Common myeloid progenitor, CD34-positive (primary cell): ENCODE measurements at regions of chr5 and their contacts with region 1.

Region 1: GRCh38 chr5:170278611-170279452 is 18.7 kb downstream of the LCP2 start:
- DNase-seq: peak; percentile 98 to 100 (median 99)
- H3K4me3 ChIP-seq: peak overlapping the region in 5 of 7 experiments; percentile 33 to 70 (median 53)
- H3K27ac ChIP-seq: peak overlapping the region; percentile 83
- H3K4me1 ChIP-seq: peaks cover 29 to 89% (median 82%) of the 10 kb centered on the region in 4 experiments
- H3K27me3 ChIP-seq: no peaks in the 10 kb centered on the region

Region 2: GRCh38 chr5:170293273-170293672 is 14.4 kb after region 1 on chr5:
- CTCF ChIA-PET with region 1: interaction called, 430 read pairs
- POLR2A ChIA-PET with region 1: interaction called, 18 read pairs
- DNase-seq: peak; percentile 84 to 95 (median 95)
- H3K4me3 ChIP-seq: peak overlapping the region in 6 of 7 experiments; percentile 11 to 94 (median 20)
- H3K27ac ChIP-seq: peak overlapping the region in 1 of 2 experiments; percentile 40
- H3K4me1 ChIP-seq: peaks cover 50 to 89% (median 80%) of the 10 kb centered on the region in 4 experiments
- H3K27me3 ChIP-seq: no peaks in the 10 kb centered on the region

Region 3: DNA sequence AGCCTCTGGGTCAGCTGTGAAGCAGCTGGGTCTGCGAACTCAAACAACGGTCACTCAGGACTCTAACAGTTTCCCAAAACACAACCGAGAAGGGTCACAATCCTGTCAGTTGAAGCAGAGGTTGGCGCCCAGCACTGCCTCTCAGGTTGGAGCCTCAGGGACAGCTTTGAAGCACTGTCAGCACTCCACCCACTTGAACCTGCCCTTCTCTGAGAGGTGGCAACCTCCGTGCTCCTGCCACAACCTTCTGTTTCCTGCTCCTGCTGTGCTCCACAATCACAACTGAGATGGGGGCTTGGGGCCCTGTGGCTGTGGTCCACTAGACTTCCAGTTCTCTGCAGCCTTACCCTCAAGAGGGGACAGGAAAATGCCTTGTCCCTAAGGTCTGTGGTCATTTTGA is 40.5 kb after region 1 on chr5:
- CTCF ChIA-PET with region 1: interaction called, 11 read pairs
- POLR2A ChIA-PET with region 1: no interaction called
- DNase-seq: peak in 2 of 3 donors; percentile 40 to 60
- H3K4me3 ChIP-seq: no peak overlapping the region
- H3K27ac ChIP-seq: no peak overlapping the region
- H3K4me1 ChIP-seq: peaks cover 0 to 12% (median 4%) of the 10 kb centered on the region in 4 experiments
- H3K27me3 ChIP-seq: no peaks in the 10 kb centered on the region

Region 4: DNA sequence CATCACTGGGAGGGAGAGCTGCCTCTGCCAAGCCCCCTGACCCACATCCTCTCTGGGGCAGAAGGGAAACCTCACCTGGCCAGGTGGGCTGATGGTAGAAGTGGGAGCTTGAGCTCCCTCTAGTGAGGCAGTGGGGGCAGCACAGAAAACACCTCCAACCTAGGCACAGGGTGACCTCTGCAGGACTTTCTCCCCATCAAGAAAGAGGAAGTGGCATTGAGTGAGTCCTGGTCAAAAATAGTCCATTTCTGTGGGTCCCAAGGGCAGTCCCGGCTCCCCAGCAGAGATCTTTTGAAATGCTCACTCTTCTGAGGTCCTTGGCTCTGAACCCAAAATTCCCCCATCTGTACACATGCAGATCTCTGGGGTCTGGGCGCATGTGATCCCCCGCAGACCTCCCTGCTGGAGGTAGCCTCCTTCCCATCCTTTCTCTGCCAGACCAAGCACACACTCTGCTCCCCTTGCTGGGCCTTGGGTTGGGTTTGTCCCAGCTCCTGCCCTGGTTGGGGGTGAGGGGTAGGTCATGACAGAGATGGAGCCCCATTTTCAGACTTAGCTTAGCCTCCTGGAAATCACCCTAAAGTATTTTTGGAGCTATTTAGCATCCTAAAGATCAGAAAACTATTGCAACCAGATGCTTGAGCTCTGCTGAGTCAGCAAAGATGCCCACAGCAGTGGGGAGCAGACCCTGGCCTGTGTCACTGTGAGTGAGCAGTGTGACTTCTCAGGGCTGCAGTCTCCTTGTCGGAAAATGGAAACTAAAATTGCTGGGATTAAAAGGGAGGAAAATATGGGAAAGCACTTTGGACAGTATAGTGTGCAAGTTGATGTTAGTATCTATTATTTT is 60.3 kb after region 1 on chr5:
- CTCF ChIA-PET with region 1: interaction called, 26 read pairs
- POLR2A ChIA-PET with region 1: interaction called, 4 read pairs
- DNase-seq: peak in 2 of 3 donors; percentile 35 to 36
- H3K4me3 ChIP-seq: no peak overlapping the region
- H3K27ac ChIP-seq: no peak overlapping the region
- H3K4me1 ChIP-seq: peaks cover 7 to 47% (median 29%) of the 10 kb centered on the region in 4 experiments
- H3K27me3 ChIP-seq: no peaks in the 10 kb centered on the region

Region 5: DNA sequence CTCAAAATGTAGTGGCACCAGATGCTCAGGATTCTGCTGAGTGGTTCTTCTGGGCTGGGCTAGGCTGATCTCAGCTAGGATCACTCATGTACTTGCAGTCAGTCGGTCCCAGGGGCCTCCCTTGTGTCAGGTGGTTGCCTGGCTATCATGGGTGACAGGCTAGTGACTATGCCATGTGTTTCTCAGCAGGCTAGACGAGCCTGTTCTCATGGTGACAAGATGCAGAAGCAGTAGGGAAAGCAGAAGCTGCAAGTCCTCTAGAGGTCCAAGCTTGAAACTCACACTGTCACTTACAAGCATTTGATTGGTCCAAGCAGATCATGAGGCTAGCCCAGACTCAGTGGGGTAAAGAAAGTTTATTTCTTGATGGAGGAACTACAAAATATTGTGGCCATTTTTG is 125.6 kb after region 1 on chr5:
- CTCF ChIA-PET with region 1: interaction called, 11 read pairs
- POLR2A ChIA-PET with region 1: no interaction called
- DNase-seq: peak; percentile 41 to 88 (median 79)
- H3K4me3 ChIP-seq: no peak overlapping the region
- H3K27ac ChIP-seq: no peak overlapping the region
- H3K4me1 ChIP-seq: peaks cover 5 to 25% (median 20%) of the 10 kb centered on the region in 4 experiments
- H3K27me3 ChIP-seq: no peaks in the 10 kb centered on the region

Region 6: DNA sequence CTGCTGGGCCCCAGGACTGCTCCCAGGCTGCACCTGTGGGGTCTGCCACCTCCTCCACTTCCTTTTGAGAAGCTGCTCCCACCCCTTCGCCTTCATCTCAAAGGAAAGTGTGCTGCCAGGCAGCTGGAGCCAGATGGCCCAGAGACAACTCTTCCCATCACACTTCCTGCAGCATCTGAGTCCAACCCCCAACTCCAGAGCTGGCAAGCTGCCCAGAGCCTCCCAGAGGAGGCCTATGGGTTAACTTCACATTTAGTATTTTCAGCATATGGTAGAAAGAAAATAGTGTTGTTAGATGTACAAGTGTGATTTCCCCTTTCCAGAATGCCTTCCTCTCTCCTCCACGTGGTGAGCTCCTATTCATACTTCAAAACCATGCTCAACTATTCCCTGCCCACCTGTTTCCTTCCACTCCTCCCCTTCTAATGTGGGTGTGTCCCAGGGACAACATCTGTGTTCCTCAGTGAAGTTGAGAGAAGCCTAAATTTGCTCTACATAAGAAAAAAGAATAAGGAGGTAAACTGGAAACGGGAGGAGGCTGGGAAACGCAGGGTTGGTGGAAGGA is 148.9 kb after region 1 on chr5:
- CTCF ChIA-PET with region 1: interaction called, 16 read pairs
- POLR2A ChIA-PET with region 1: no interaction called
- DNase-seq: peak in 2 of 3 donors; percentile 24 to 27
- H3K4me3 ChIP-seq: no peak overlapping the region
- H3K27ac ChIP-seq: no peak overlapping the region
- H3K4me1 ChIP-seq: peaks cover 0 to 34% (median 16%) of the 10 kb centered on the region in 4 experiments
- H3K27me3 ChIP-seq: no peaks in the 10 kb centered on the region